ENCODE measurements at regions of chr14 and their contacts with region 1.

Region 1: GRCh38 chr14:24673534-24674203 is 39.7 kb upstream of the GZMB start:
- DNase-seq: peak; percentile 83
- H3K4me3 Mint-ChIP-seq: peak overlapping the region; percentile 76
- H3K27ac Mint-ChIP-seq: peak overlapping the region; percentile 97
- H3K4me1 Mint-ChIP-seq: peaks cover 88% of the 10 kb centered on the region
- H3K27me3 Mint-ChIP-seq: no peaks in the 10 kb centered on the region

Region 2: DNA sequence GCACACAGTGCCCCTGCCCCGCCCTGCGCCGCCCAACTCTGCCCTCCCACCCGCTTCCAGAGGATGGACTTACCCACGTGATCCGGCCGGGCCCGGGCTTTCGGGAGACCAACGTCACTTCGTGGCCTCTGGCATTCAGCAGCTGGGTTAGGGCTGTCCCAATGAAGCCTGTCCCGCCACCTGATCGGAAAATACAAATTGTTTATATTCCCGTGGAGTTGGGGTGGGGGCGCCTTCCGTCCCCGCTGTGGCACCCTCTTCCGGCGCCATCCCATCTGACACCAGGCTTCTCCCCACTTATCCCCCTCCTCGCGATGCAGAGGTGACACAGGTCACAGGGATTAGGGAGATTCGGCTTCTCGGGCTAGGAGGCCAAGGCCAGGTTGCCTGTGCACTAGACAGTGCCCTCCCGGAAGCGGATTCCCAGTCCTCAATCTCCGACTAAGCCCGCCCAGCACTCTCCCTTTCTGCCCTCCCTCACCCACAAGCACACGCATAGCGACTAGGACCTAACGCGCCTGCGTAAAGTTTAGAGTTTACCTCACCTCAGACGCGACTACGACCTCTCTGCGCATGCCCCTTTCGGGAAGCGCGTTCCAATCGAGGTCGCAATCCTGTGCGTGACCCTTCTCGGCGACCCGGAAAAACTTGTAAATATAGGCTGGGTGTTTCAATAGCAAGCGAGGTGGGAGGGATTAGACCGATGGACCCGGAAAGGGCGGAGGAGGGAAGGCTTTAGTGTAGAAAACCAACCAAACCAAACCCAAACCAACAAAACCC is 231.2 kb before region 1 on chr14 and contains the start of gene SDR39U1:
- CTCF ChIA-PET with region 1: no interaction called
- POLR2A ChIA-PET with region 1: interaction called, 13 read pairs
- DNase-seq: peak; percentile 98
- H3K4me3 Mint-ChIP-seq: peak within 1 kb of the TSS; percentile 92
- H3K27ac Mint-ChIP-seq: peak within 1 kb of the TSS; percentile 97
- H3K4me1 Mint-ChIP-seq: peaks cover 52% of the 10 kb centered on the region
- H3K27me3 Mint-ChIP-seq: no peaks in the 10 kb centered on the region
- total RNA-seq, gene SDR39U1: 38.5 to 41.6 TPM

Region 3: GRCh38 chr14:24595073-24595808 is 78.4 kb before region 1 on chr14:
- CTCF ChIA-PET with region 1: no interaction called
- POLR2A ChIA-PET with region 1: no interaction called
- DNase-seq: no peak
- H3K4me3 Mint-ChIP-seq: no peak overlapping the region
- H3K27ac Mint-ChIP-seq: no peak overlapping the region
- H3K4me1 Mint-ChIP-seq: peaks cover 4% of the 10 kb centered on the region
- H3K27me3 Mint-ChIP-seq: peaks cover 45% of the 10 kb centered on the region

Region 4: DNA sequence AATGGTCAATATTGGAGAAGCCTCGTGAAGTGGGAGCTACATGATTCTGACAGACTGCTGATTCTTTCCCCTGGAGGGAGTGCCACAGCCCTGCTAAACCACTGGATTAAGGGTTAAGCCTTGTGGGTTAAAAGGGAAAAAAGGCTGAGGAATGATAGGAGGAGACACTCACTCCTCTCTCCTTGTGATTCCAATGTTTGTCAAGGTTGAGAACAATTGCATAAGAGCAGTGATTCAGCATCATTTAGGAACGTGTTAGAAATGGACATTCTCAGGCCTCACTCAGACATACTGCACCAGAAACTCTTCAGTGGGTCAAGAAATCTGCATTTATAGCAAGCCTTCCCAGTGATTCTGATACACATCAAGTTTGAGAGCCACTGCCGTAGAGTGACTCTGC is 48.1 kb after region 1 on chr14:
- CTCF ChIA-PET with region 1: no interaction called
- POLR2A ChIA-PET with region 1: no interaction called
- DNase-seq: no peak
- H3K4me3 Mint-ChIP-seq: no peak overlapping the region
- H3K27ac Mint-ChIP-seq: no peak overlapping the region
- H3K4me1 Mint-ChIP-seq: no peaks in the 10 kb centered on the region
- H3K27me3 Mint-ChIP-seq: peaks cover 13% of the 10 kb centered on the region

Measured in activated CD4-positive, alpha-beta memory T cell treated with anti-CD3 and anti-CD28 coated beads, Interleukin-2, amount 10 ng/mL, durations not matched to agents 7 days and 5 days (primary cell).